Naive thymus-derived CD8-positive, alpha-beta T cell (primary cell): ENCODE measurements at regions of chr17 and their contacts with region 1.

Region 1: DNA sequence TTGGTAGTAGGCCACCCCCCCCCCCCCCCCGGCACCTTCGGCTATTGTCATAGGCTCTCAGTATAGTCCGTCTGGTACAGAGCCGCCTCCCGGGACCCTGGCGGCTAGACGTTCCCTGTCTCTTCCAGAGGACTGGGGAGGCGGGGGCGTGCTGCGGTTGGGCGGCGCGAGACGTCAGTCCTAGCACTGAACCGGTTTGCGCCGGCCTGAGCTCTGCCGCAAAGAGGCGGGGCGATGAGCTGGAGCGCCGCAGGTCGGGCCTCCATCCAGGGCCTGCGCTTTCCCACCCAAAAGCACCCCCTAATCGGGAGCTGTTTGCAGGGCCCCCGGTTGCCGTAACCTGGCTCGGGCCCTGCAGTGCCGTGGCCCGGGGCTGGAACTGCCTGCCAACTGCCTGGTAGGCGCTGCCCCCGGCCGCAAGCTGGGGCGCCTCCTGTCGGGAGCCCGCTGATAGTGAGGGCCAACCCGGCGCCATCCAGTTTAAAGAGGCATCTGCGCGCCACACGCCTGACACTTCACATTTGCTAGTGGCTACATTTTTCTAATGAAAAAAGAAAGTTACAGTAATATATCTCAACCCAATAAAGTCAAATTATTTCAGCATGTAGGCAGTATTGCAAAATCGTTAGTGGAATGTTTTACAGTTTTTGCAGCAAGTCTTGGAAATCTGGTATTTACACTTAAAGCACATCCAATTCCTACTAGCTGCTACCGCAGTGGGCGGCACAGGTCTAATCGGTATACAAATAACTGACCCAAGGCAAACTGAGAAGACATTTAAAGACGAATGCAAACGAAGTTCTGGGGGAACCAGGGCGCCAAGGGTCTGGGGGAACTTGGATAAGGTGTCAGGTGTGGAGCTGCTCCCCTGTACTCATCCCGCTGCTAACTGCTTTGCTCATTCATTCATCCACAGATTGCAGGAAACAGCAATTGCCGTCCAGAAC is 748 bp upstream of the USP22 start:
- DNase-seq: peak; percentile 92 to 98 (median 96)
- ATAC-seq: peak; percentile 81 to 85
- H3K4me3 Mint-ChIP-seq: peak overlapping the region; percentile 74 to 96 (median 84)
- H3K27ac Mint-ChIP-seq: peak overlapping the region; percentile 85 to 97 (median 93)
- H3K4me1 Mint-ChIP-seq: peaks cover 12 to 40% (median 35%) of the 10 kb centered on the region in 4 donors
- H3K27me3 Mint-ChIP-seq: no peaks in the 10 kb centered on the region

Region 2: DNA sequence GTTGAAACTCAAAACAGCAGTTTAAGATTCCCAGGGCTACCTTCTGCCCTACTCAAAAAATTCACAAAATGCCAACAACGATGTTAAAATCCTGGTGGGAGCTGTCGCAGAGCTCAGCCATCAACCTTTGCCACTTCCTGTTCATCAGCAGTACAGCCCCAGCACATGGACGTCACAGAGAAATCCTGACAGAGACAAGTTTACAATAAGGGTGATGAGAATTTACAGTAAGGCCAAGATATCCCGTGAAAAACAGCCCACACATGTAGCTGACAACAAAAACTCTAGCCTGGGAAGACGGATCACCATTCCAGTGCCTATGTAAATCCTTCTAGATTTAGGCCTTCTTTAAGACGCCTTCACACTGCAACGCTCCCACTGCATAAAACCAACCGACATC is 19.5 kb before region 1 on chr17:
- POLR2A ChIA-PET with region 1: interaction called, 12 read pairs
- DNase-seq: peak in 2 of 10 donors; percentile 16 to 21
- ATAC-seq: peak; percentile 51 to 67
- H3K4me3 Mint-ChIP-seq: peak overlapping the region in 8 of 10 donors; percentile 0 to 56 (median 44)
- H3K27ac Mint-ChIP-seq: peak overlapping the region; percentile 58 to 90 (median 80)
- H3K4me1 Mint-ChIP-seq: peaks cover 34 to 70% (median 61%) of the 10 kb centered on the region in 4 donors
- H3K27me3 Mint-ChIP-seq: no peaks in the 10 kb centered on the region

Region 3: DNA sequence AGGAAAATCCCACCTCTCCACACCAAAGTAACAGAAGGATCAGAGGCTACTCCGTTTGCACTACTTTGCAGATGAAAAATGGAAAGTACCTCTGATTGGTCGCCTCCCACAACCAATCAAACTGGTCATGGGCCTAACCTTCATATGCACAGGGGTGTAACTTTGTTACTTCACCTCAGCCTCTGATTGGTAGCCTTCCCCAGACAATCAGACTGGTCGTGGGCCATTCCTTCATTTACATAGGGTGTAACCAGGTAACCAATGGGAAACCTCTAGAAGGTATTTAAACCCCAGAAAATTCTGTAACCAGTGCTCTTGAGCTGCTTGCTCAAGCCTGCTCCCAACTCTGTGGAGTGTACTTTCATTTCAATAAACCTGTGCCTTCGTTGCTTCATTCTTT is 38.4 kb after region 1 on chr17:
- POLR2A ChIA-PET with region 1: no interaction called
- DNase-seq: no peak
- ATAC-seq: no peak
- H3K4me3 Mint-ChIP-seq: no peak overlapping the region
- H3K27ac Mint-ChIP-seq: no peak overlapping the region
- H3K4me1 Mint-ChIP-seq: no peaks in the 10 kb centered on the region
- H3K27me3 Mint-ChIP-seq: peaks cover 3 to 18% (median 8%) of the 10 kb centered on the region in 5 donors

Region 4: DNA sequence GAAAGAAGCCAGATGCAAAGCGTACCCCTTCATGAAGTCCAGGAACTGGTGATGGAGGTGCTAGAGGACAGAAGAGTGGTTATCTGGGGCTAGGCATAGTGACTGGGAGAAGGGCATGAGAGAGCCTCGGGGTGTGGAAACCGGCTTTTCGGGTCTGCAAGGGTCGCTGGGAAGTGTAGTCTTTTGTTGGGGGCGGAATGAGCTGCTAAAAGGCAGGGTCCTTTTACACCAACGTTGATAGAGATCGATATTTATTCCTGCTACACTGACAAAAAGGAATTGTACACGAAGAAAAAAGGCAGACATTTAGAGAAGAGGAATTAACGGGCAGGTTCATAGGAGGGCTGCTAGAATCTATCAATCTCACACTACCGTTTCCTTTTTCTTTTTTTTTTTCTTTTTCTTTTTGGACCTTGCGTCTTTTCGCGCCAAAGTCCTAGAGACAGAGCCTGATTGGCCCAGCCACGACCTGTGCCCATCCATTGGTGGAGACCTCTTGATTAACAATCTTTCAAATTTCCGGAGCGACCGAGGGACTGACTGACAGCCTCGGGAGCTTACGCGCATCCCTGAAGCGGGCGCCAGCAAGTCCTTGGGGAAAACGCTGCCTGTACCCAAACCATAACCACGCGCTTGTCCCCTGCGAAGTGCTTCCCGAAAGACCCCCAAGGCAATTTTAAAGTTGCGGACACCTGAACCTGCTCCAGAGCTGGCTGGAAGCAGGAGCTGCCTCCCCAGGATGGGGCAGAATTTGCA is 55.6 kb after region 1 on chr17:
- POLR2A ChIA-PET with region 1: interaction called, 23 read pairs
- DNase-seq: peak; percentile 42 to 80 (median 60)
- ATAC-seq: peak; percentile 97 to 99
- H3K4me3 Mint-ChIP-seq: peak overlapping the region; percentile 87 to 94 (median 90)
- H3K27ac Mint-ChIP-seq: peak overlapping the region in 7 of 10 donors; percentile 12 to 78 (median 56)
- H3K4me1 Mint-ChIP-seq: peaks cover 6 to 16% (median 13%) of the 10 kb centered on the region in 4 donors
- H3K27me3 Mint-ChIP-seq: peaks cover 0 to 3% (median 0%) of the 10 kb centered on the region in 5 donors

Region 5: DNA sequence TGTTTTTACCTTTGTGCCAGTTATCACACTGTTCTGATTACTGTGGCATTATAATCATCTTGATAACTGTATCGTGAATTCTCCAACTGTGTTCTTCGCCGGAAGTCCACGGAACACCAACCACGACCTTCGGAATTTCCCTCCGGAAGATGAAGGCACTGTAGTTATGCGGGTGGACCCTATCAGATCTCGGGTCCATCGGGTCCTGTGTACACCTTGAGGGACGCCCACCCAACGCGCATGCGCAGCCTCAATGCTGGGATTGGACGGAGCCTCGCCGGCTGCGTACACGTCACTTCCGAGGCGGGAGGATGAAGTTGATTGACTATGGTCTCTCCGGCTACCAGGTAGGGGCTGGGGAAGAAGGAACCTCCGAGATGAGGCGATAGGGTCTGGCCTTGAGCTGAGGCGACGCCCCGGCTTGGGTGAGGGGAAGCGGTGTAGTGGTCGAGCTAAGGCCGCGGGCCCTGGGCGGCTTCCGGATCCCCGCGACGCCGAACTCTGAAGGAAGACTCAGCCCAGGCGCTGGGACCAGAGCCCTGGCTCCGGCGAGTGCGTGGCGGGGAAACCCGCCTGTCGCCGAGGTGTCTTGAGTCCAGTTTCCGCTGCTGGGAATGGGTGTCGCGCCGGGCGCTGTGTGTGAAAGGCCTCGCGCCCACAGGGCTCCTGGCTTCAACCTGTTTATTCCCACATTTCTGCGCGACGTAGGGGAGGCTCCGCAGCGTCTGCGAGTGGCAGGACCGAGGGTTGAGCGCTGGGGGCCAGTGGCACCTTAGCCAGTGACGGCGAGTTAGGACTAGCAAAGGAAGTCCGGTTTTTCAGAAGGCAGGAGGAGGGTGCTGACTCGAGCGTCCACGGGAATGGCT is 83.3 kb after region 1 on chr17 and contains the start of gene DHRS7B:
- POLR2A ChIA-PET with region 1: interaction called, 12 read pairs
- DNase-seq: peak; percentile 94 to 98 (median 96)
- ATAC-seq: peak; percentile 90 to 91
- H3K4me3 Mint-ChIP-seq: peak within 1 kb of the TSS; percentile 91 to 99 (median 97)
- H3K27ac Mint-ChIP-seq: peak within 1 kb of the TSS; percentile 94 to 98 (median 97)
- H3K4me1 Mint-ChIP-seq: peaks cover 26 to 56% (median 48%) of the 10 kb centered on the region in 4 donors
- H3K27me3 Mint-ChIP-seq: peaks cover 0 to 2% (median 0%) of the 10 kb centered on the region in 5 donors
- polyA plus RNA-seq, gene DHRS7B: 6.4 to 8.0 (median 7.0) TPM

Region 6: GRCh38 chr17:21171309-21171922 is 127.9 kb after region 1 on chr17:
- POLR2A ChIA-PET with region 1: no interaction called
- DNase-seq: no peak
- ATAC-seq: no peak
- H3K4me3 Mint-ChIP-seq: no peak overlapping the region
- H3K27ac Mint-ChIP-seq: peak overlapping the region in 5 of 10 donors; percentile 47 to 82 (median 57)
- H3K4me1 Mint-ChIP-seq: peaks cover 6 to 12% (median 11%) of the 10 kb centered on the region in 4 donors
- H3K27me3 Mint-ChIP-seq: no peaks in the 10 kb centered on the region

Region 7: DNA sequence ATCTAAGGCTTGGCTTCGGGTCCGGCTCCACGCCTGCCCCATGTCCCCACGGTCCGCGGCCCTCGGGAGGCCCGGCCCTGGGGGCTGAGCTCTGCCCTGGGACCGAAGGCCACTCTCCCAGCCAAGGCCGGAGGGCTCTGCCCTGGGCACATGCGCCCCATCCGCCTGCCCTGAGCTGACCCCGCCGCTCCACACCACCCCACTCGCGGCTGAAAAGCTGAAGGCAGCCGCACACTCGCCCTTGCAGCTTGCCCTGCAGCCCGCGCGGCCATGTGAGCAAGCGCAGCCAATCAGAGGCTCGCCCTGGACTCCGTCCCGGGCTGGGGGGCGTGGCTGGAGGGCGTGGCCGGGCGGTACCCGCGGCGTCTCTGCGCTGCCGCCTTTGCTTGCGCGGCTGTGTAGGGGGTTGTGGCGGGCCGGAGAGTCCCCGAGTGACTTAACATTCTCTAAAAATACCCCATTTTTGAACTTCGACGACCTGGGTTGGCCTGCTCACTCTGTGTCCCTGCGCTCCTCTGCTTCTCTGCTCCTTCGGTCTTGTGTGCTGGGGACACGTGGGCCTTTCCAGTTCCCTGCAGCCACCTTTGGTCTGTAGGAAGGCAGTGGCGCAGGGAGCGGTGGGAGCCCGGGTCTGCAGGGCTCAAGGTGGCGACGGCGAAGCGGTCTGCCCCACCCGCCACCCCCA is 232.2 kb after region 1 on chr17:
- POLR2A ChIA-PET with region 1: interaction called, 15 read pairs
- DNase-seq: peak; percentile 84 to 95 (median 91)
- ATAC-seq: peak; percentile 86 to 90
- H3K4me3 Mint-ChIP-seq: peak overlapping the region; percentile 83 to 99 (median 94)
- H3K27ac Mint-ChIP-seq: peak overlapping the region; percentile 86 to 97 (median 92)
- H3K4me1 Mint-ChIP-seq: peaks cover 24 to 51% (median 48%) of the 10 kb centered on the region in 4 donors
- H3K27me3 Mint-ChIP-seq: no peaks in the 10 kb centered on the region

Region 8: GRCh38 chr17:21284319-21285163 is 241.0 kb after region 1 on chr17 and contains the start of gene MAP2K3:
- POLR2A ChIA-PET with region 1: interaction called, 10 read pairs
- DNase-seq: peak; percentile 78 to 95 (median 87)
- ATAC-seq: peak; percentile 70 to 77
- H3K4me3 Mint-ChIP-seq: peak within 1 kb of the TSS; percentile 87 to 97 (median 94)
- H3K27ac Mint-ChIP-seq: peak within 1 kb of the TSS; percentile 88 to 98 (median 96)
- H3K4me1 Mint-ChIP-seq: peaks cover 36 to 76% (median 51%) of the 10 kb centered on the region in 4 donors
- H3K27me3 Mint-ChIP-seq: no peaks in the 10 kb centered on the region
- polyA plus RNA-seq, gene MAP2K3: 49.0 to 69.4 (median 49.7) TPM